GM10248 (cell line): ENCODE measurements at regions of chr1 and their contacts with region 1.

Region 1: DNA sequence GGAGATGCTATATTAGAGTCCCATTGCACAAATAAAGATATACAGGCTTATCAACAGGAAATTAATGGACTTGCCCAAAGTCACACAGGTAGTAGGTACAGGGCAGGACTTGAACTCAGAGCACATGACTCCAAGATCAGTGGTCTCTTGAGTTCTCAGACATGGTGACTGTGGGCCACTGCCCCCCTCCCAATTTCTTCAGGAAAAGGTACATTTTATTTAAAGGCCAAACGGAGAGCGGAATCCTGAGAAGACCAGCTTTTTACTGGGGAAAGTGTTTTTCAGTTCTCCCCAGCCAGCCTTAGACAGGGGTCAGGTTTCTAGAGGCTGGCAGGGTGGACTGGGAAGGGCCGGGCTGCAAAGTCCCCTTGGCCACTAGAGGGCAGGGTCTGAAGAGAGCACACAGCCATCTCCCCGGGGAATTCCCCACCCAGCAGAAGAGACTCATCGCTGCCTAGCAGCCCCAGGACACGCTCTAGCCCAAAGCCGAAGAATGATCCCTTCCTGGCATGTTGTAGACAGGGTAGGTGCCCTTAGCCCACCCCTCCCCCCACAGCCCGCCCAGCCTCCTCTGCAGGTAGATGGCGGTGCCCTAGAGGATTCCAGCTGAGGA is 29.7 kb downstream of the ACP6 start:
- DNase-seq: peak; percentile 89
- CTCF ChIP-seq: peak; percentile 89

Region 2: DNA sequence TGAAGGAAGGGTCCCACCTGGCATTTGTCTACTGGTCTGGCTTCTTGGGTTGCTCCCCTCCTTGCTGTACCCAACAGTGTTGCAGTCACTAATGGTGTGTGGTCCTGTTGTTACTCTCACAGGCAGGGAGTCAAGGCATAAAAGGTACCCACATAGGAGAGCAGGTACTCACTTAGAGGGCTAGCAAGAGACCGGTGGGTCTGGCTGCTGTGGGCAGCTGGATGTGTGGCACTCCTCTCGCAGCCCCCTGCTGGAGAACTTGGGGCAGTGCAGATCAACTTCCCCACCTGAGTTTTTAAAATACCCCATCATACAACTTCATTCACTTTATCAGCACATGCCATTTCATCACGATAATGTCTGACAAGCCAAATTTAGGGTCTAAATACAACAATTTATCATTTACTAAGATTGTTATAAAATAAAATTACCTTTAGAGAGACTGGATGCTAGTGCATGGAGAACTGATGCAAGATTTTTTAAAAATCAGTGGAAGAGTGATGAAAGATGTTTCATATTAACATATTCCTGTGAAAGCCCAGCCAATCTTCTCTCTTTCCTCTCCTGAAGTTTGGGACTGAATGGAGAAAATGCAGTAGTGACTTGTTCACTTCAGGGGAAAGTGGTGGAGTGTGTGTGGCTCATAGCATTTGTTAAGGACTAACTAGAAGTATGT is 13.1 kb before region 1 on chr1:
- CTCF ChIA-PET with region 1: interaction called, 57 read pairs
- POLR2A ChIA-PET with region 1: no interaction called
- DNase-seq: peak; percentile 82
- CTCF ChIP-seq: peak; percentile 82

Region 3: GRCh38 chr1:147651213-147651865 is 10.7 kb after region 1 on chr1:
- CTCF ChIA-PET with region 1: interaction called, 15 read pairs
- POLR2A ChIA-PET with region 1: no interaction called
- DNase-seq: no peak
- CTCF ChIP-seq: no peak

Region 4: DNA sequence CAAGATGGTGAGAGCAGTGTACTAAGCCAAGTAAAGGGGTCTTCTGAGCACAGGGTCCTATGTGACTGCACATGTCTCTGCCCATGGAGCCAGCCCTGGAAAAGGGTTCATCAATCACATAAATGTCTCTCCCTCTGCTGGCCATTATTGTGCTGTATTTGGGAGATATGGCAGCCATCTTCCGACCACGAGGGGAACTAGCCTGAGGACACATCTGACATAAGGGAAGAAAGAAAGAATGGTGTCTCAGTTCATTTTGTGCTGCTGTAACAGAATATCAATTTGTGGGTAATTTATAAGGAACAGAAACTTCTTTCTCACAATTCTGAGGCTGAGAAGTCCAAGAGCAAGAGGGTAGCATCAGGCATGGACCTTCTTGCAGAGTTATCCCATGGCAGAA is 174.8 kb after region 1 on chr1:
- CTCF ChIA-PET with region 1: no interaction called
- POLR2A ChIA-PET with region 1: no interaction called
- DNase-seq: no peak
- CTCF ChIP-seq: no peak